ENCODE measurements at regions of chr4 and their contacts with region 1.

Region 1: DNA sequence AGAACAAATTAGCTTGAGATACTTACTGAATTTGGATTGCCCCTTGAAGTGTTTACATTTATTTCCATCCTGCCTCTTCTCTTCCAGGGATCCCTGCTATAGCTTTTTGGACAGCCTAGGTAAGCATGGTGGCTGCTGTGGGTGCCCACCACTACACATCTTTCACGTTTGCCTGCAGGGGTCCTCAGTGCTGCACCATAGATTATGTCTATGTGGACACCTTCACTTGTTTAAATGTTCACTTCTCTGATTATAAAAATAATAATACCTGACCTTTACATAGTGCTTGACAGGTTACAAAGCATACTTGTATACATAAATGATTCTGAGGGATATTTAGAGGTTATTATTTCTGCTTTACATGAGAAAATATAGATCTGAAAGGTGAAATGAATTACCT is 67.9 kb upstream of the SLC4A4 start:
- DNase-seq: no peak
- CTCF ChIP-seq: peak; percentile 52

Region 2: GRCh38 chr4:70589785-70590184 is 681.1 kb before region 1 on chr4:
- in situ Hi-C with region 1: no loop called
- DNase-seq: peak; percentile 14
- CTCF ChIP-seq: no peak

Region 3: DNA sequence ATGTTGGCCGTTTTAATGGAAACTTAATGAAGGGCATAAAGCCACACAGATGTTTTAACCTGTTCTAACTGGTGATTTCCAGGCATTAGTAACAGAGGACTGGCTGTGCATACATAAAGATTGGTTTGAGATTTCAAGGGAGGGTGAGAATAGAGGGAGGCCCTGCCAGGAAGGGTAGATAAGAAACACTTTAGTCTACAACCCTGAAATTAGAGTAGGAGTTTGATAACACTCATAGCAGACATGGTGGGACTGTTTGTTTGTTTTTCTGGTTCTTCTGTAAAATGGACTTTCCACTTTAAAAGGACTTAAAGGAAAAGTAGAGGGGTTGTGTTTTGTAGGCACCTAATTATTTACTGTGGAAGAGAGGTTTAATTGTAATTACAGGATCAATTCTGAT is 84.1 kb after region 1 on chr4:
- in situ Hi-C with region 1: no loop called
- DNase-seq: no peak
- CTCF ChIP-seq: no peak

Region 4: DNA sequence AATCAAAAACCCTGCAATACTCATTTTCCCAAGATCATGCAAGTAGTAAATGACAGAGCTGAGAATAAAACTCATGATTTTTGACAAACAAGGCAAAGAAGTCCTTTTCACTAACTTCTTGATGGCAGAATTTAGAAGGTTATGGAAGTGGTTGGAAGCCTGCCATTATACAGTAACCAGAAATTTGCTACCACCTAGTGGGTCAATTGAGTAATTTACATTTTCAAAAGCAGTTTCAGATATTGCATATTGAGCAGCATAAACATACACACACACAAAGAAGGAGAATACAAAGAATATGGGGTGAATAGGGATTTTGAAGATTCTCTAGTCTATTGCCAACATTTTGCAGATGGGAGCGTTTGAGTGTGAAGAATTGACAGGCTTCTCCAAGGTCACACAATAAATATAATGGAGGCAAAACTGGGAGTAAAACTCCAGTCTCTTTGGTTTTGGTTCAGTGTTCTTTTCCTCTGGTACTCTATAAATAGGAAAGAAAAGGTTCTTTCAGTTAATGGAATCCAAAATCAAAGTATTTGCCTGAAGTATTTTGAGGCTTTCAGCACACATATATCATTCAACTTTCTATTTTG is 442.8 kb after region 1 on chr4:
- in situ Hi-C with region 1: loop called (anchors 25 kb)
- DNase-seq: peak; percentile 7
- CTCF ChIP-seq: peak; percentile 60

Measured in GM13977 (cell line).